ENCODE measurements at regions of chr15 and their contacts with region 1.

Region 1: DNA sequence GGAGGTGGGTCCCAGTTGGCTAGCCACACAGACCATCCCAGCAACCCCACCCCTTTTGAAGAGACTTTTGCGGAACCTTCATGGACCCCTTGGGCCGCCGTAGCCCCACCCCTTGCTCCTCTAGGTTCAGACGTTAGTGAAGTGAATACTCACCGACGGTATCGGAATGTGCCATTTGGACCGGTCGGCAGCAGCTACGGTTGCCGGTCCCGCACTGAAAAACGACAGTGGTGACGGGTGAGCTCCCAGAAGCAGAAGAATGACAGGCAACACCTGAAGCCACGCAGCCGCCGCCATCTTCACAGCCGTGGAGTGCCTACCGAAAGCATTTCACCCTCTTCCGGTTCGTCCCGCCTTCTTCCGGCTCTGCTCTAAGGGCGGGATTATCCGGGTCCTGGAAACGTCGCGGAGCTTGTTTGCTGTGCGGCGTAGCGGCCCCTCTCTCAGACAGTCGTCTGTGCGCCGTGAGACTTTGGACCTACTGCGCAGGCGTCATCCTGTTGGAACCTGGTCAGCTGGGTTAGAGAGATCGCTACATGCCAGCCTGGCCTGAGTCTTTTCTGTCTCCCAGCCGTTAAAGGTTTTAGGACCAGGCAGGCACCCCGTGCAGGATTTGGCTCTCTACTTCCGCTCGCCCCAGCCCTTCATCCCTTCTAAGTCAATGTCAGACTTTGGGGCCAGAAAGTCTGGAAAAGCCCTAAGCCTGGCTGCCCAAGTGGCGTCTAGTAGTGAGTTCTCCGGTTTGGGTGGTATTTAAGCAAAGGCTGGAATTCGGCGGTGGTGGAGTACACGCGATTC is at the starts of genes GANC and TMEM87A:
- DNase-seq: peak; percentile 99
- H3K4me3 Mint-ChIP-seq: peak within 1 kb of the TSS; percentile 95
- H3K27ac Mint-ChIP-seq: peak within 1 kb of the TSS; percentile 99
- H3K4me1 Mint-ChIP-seq: peaks cover 39% of the 10 kb centered on the region
- H3K27me3 Mint-ChIP-seq: no peaks in the 10 kb centered on the region
- total RNA-seq, gene GANC: 15.0 and 17.6 TPM in 2 replicates
- total RNA-seq, gene TMEM87A: 37.1 and 39.1 TPM in 2 replicates

Region 2: GRCh38 chr15:41660235-41661077 is 612.8 kb before region 1 on chr15 and contains the start of gene MGA:
- intact Hi-C with region 1: loop called (anchors 5 kb)
- DNase-seq: peak; percentile 97
- H3K4me3 Mint-ChIP-seq: peak within 1 kb of the TSS; percentile 88
- H3K27ac Mint-ChIP-seq: peak within 1 kb of the TSS; percentile 89
- H3K4me1 Mint-ChIP-seq: peaks cover 30% of the 10 kb centered on the region
- H3K27me3 Mint-ChIP-seq: peaks cover 18% of the 10 kb centered on the region
- total RNA-seq, gene MGA: 36.0 and 37.7 TPM in 2 replicates

Region 3: DNA sequence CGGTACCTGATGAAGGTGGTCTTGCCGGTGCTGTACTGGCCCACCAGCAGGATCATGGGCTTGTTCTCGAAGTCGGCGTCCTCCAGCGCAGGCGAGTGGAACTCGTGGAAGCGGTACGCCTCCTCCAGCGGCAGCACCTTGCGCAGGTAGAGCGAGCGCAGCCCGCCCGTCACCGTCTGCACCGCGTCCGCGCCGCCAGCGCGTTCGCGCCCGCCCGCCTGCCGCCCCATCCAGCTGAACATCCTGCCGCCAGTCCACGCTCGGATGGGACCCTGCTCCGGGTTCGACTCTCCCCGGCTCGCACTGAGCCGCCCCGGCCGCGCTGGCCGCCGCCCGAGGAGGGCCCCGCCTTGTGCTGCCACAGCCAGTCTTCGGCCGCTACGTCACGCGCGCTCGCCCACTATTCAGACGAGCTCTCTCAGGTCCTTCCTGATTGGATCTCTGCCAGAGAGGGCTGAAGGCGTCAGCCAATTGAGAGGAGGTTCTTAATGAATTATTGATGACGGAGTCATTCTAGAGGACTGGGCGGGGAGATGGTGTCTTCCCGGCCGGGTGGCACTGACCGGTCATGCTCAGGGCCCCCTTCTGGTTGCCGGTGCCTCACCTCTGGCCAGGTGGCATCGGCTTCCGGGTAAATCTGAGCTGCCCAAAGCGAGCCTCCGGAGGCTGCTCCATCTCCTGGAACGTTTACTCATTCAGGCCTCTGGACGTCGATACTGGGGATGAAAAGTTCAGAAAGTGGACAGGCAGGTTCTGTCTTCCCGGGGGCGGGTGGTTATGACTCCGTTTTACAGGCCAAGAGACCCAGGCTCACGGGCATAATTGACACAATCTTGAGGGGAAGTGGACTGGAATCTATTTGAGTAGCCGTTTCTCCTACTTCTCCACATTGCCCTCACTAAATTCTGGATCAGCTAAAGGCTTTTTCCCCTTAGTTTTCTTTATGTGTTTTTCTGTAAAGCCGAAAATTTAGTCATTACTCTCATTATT is 300.8 kb before region 1 on chr15 and contains the start of gene EHD4:
- intact Hi-C with region 1: loop called (anchors 5 kb)
- DNase-seq: peak; percentile 99
- H3K4me3 Mint-ChIP-seq: peak within 1 kb of the TSS; percentile 94
- H3K27ac Mint-ChIP-seq: peak within 1 kb of the TSS; percentile 95
- H3K4me1 Mint-ChIP-seq: peaks cover 47% of the 10 kb centered on the region
- H3K27me3 Mint-ChIP-seq: peaks cover 22% of the 10 kb centered on the region
- total RNA-seq, gene EHD4: 28.4 and 28.9 TPM in 2 replicates

Region 4: DNA sequence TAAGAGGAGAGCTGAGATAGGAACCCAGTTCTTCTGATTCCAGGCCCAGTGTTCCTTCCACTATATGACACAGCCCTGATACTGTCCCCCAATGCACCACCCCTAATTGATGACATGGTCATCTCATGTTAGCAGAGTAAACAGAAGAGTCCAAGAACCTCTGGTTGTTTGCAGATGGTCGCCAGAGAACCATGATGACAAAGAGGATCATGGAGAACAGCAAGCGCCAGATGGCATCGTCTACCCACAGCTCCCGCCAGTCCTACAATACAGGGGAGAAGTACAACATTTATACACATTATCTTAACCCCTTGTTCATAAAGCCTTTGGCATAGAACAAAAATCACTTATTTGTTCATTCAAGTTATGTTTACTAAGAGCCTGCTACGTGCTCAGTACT is 46.7 kb before region 1 on chr15:
- intact Hi-C with region 1: no loop called
- DNase-seq: no peak
- H3K4me3 Mint-ChIP-seq: no peak overlapping the region
- H3K27ac Mint-ChIP-seq: no peak overlapping the region
- H3K4me1 Mint-ChIP-seq: no peaks in the 10 kb centered on the region
- H3K27me3 Mint-ChIP-seq: no peaks in the 10 kb centered on the region

Region 5: GRCh38 chr15:42474827-42475226 is 201.5 kb after region 1 on chr15:
- intact Hi-C with region 1: loop called (anchors 5 kb)
- DNase-seq: no peak
- H3K4me3 Mint-ChIP-seq: no peak overlapping the region
- H3K27ac Mint-ChIP-seq: no peak overlapping the region
- H3K4me1 Mint-ChIP-seq: peaks cover 8% of the 10 kb centered on the region
- H3K27me3 Mint-ChIP-seq: no peaks in the 10 kb centered on the region

Region 6: DNA sequence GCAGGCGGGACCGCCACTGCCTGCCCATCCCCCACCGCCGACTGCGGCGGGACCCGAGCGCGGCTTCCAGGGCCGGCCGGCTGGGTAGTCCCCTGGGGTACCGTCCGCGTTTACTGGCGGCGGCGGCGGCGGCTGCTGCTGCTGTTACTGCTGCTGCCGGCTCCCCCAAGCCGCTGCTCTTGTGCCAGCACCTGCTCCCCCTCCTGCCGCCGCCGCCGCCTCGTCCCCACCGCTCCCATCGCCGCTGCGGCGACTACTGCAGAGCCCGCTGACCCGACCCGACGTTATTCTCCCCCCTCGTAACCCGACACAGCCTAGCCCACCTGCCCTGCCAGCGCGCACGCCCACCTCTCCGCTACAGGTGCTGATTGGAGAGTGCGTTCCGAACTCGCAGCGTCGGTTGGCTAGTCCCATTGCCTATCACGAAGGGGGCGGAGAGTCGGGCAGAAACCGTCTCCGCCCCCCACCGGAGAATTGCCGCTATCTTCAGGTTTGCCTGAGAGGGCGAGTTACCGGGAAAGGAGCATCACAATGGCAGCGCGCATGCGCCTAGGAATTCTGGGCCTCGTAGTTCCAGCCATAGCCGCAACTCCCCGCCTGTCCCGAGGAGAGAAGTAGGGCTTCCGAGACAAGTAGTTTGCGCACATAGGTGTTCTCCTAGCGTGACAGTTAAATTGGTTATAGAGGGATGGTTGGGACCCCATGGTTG is 647.4 kb after region 1 on chr15 and contains the start of gene TTBK2:
- intact Hi-C with region 1: loop called (anchors 10 kb)
- DNase-seq: peak; percentile 99
- H3K4me3 Mint-ChIP-seq: peak within 1 kb of the TSS; percentile 99
- H3K27ac Mint-ChIP-seq: peak within 1 kb of the TSS; percentile 94
- H3K4me1 Mint-ChIP-seq: peaks cover 26% of the 10 kb centered on the region
- H3K27me3 Mint-ChIP-seq: no peaks in the 10 kb centered on the region
- total RNA-seq, gene TTBK2: 10.2 and 11.3 TPM in 2 replicates